PC-9 (cell line): ENCODE measurements at regions of chr13 and their contacts with region 1.

Region 1: GRCh38 chr13:88824218-88824617 is 1153.0 kb downstream of the SLITRK5 start:
- DNase-seq: no peak
- H3K4me3 ChIP-seq: no peak overlapping the region
- H3K27ac ChIP-seq: no peak overlapping the region
- H3K4me1 ChIP-seq: no peaks in the 10 kb centered on the region
- H3K27me3 ChIP-seq: no peaks in the 10 kb centered on the region
- CTCF ChIP-seq: no peak

Region 2: DNA sequence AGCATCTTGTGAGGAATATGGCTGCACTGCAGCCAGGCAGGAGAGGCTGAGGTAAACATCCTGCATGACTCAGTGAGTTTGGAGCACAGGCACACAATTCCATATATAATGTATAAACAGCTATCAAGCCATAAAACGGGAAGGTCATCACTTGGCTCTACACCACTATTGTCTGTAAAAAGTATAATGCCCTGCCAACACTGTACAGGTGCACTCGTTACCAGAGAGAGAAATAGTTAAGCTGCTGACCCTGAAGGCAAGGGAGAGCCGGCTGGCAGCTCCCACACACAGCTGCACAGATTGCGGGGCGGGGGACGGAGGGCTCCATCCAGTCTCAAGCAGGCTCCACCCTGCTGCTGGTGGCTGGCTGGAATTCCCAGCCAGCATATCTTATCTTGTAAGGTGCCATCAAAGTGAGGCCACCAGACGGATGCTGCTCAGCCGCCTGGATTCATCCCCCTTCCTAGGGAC is 484.9 kb before region 1 on chr13:
- CTCF ChIA-PET with region 1: no interaction called
- POLR2A ChIA-PET with region 1: no interaction called
- intact Hi-C with region 1: no loop called
- DNase-seq: no peak
- H3K4me3 ChIP-seq: no peak overlapping the region
- H3K27ac ChIP-seq: no peak overlapping the region
- H3K4me1 ChIP-seq: no peaks in the 10 kb centered on the region
- H3K27me3 ChIP-seq: no peaks in the 10 kb centered on the region
- CTCF ChIP-seq: no peak

Region 3: DNA sequence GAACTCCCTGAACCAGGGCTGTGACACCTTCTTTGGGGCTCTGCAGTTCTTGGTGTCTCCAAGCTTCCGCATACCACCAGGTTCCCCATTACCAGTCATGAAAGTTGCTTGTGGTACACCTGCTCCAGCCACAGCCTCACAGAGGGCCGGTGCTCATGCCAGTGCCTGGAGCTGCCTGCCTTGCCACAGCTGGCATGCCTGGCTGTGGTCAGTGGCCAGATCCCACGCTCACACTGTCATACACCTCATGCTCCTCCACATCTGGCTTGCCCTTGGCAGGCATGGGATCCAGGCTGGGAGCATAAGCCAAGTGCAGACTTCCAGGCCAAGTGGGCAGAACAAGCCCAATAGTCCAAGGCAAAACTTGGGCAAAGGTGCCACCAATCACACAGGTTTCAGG is 98.1 kb before region 1 on chr13:
- CTCF ChIA-PET with region 1: no interaction called
- POLR2A ChIA-PET with region 1: interaction called, 13 read pairs
- intact Hi-C with region 1: no loop called
- DNase-seq: no peak
- H3K4me3 ChIP-seq: no peak overlapping the region
- H3K27ac ChIP-seq: no peak overlapping the region
- H3K4me1 ChIP-seq: no peaks in the 10 kb centered on the region
- H3K27me3 ChIP-seq: no peaks in the 10 kb centered on the region
- CTCF ChIP-seq: no peak